B cell (primary cell): ENCODE measurements at regions of chrX and their contacts with region 1.

Region 1: GRCh38 chrX:30570505-30570904 is 7.1 kb downstream of the TASL start:
- DNase-seq: peak; percentile 50
- ATAC-seq: peak; percentile 43
- H3K4me3 ChIP-seq: no peak overlapping the region
- H3K4me3 Mint-ChIP-seq: no peak overlapping the region
- H3K27ac ChIP-seq: no peak overlapping the region
- H3K27ac Mint-ChIP-seq: no peak overlapping the region
- H3K4me1 ChIP-seq: peaks cover 31 to 37% of the 10 kb centered on the region in 2 donors
- H3K4me1 Mint-ChIP-seq: peaks cover 43% of the 10 kb centered on the region
- H3K27me3 ChIP-seq: no peaks in the 10 kb centered on the region
- H3K27me3 Mint-ChIP-seq: no peaks in the 10 kb centered on the region
- CTCF ChIP-seq: peak; percentile 66

Region 2: DNA sequence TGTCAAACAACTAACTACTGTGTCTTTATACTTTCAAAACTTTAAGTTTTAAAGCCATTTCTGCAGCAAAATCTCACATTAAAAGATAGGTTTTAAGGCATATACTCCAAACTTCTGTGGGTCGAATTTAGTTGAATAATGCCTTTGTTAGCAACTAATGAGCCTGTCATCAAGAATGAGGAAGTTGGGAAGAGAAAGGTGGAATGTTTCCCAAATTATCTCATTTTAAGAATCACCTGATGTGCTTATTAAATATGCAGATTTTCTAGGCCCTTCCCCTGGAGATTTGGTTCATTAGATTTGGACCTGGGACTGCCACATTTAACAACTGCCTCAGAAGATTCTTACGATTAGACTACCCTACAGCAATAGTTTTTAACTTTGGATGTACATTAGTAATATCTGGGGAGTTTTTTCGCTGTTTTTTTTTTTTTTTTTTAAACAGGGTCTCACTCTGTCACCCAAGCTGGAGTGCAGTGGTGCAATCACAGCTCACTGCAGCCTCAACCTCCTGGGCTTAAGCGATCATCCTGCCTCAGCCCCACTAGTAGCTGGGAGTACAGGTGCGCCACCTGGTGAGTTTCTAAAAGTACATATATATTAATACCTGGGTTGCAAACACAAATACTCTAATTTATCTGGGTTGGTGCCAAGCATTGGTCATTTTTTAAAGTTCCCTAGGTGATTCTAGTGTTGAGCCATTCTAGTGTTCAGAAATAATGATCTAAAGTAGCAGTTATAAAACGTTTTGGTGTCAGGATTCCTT is 23.1 kb after region 1 on chrX:
- CTCF ChIA-PET with region 1: interaction called, 65 read pairs
- POLR2A ChIA-PET with region 1: interaction called, 5 read pairs
- intact Hi-C with region 1: loop called (anchors 1 kb)
- DNase-seq: peak; percentile 62
- ATAC-seq: peak; percentile 46
- H3K4me3 ChIP-seq: peak overlapping the region in 1 of 5 experiments; percentile 6
- H3K4me3 Mint-ChIP-seq: peak overlapping the region; percentile 70
- H3K27ac ChIP-seq: peak overlapping the region; percentile 65 to 73
- H3K27ac Mint-ChIP-seq: peak overlapping the region; percentile 87
- H3K4me1 ChIP-seq: peaks cover 60 to 61% of the 10 kb centered on the region in 2 donors
- H3K4me1 Mint-ChIP-seq: peaks cover 68% of the 10 kb centered on the region
- H3K27me3 ChIP-seq: no peaks in the 10 kb centered on the region
- H3K27me3 Mint-ChIP-seq: no peaks in the 10 kb centered on the region
- CTCF ChIP-seq: peak; percentile 36

Region 3: DNA sequence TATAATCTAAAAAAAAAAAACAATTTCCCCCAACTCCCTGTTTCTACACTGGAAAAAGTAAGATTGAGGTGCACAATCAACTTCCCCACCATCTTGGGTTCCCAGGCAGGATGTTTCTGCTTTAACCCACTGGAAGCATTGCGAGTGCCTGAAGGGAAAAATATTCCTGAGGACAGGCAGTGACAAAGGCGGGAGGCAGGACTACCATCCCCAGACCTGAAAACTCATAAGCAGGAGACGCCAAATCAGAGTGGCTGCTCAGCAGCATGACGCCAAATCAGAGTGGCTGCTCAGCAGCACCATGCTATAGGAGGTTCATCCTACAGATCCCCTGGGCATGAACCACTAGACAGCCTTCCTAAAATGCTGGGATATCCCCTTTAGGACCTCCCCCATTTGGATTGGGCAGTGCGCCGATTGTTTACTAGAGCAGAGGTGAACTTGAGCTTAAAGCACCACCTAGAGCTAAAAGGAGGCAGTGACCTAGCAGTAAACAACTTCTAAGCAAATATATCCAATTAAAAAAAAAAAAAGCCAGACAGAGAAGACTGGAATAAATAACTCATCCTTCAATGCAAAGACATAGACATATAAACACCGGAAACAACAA is 47.8 kb after region 1 on chrX:
- CTCF ChIA-PET with region 1: interaction called, 24 read pairs
- POLR2A ChIA-PET with region 1: no interaction called
- intact Hi-C with region 1: no loop called
- DNase-seq: no peak
- ATAC-seq: no peak
- H3K4me3 ChIP-seq: no peak overlapping the region
- H3K4me3 Mint-ChIP-seq: no peak overlapping the region
- H3K27ac ChIP-seq: no peak overlapping the region
- H3K27ac Mint-ChIP-seq: no peak overlapping the region
- H3K4me1 ChIP-seq: no peaks in the 10 kb centered on the region
- H3K4me1 Mint-ChIP-seq: peaks cover 2% of the 10 kb centered on the region
- H3K27me3 ChIP-seq: no peaks in the 10 kb centered on the region
- H3K27me3 Mint-ChIP-seq: no peaks in the 10 kb centered on the region
- CTCF ChIP-seq: no peak

Region 4: DNA sequence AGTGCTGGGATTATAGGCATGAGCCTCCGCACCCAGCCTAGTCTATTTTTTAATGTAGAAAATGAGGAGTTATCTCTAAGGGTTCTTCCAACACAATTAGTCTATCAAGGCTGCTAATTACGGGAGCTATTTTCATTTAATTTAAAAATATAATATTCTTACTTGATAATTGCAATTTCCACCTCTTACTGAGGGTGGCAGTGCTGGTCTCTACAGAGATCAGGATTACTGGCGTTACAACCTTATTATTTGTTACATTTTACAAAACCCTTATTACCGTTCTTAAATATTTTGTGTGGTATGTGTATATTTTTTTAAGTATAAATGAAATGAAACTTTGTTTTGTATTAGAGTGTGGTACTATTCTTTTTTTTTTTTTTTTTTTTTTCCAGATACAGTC is 65.1 kb after region 1 on chrX:
- CTCF ChIA-PET with region 1: no interaction called
- POLR2A ChIA-PET with region 1: no interaction called
- intact Hi-C with region 1: no loop called
- DNase-seq: no peak
- ATAC-seq: no peak
- H3K4me3 ChIP-seq: no peak overlapping the region
- H3K4me3 Mint-ChIP-seq: no peak overlapping the region
- H3K27ac ChIP-seq: no peak overlapping the region
- H3K27ac Mint-ChIP-seq: no peak overlapping the region
- H3K4me1 ChIP-seq: peaks cover 4 to 6% of the 10 kb centered on the region in 2 donors
- H3K4me1 Mint-ChIP-seq: peaks cover 5% of the 10 kb centered on the region
- H3K27me3 ChIP-seq: no peaks in the 10 kb centered on the region
- H3K27me3 Mint-ChIP-seq: no peaks in the 10 kb centered on the region
- CTCF ChIP-seq: peak; percentile 27

Region 5: GRCh38 chrX:30713061-30713525 is 142.6 kb after region 1 on chrX:
- CTCF ChIA-PET with region 1: no interaction called
- POLR2A ChIA-PET with region 1: no interaction called
- intact Hi-C with region 1: loop called (anchors 2 kb)
- DNase-seq: peak; percentile 18
- ATAC-seq: no peak
- H3K4me3 ChIP-seq: no peak overlapping the region
- H3K4me3 Mint-ChIP-seq: peak overlapping the region; percentile 49
- H3K27ac ChIP-seq: no peak overlapping the region
- H3K27ac Mint-ChIP-seq: peak overlapping the region; percentile 65
- H3K4me1 ChIP-seq: peaks cover 7% of the 10 kb centered on the region in 2 donors
- H3K4me1 Mint-ChIP-seq: peaks cover 8% of the 10 kb centered on the region
- H3K27me3 ChIP-seq: no peaks in the 10 kb centered on the region
- H3K27me3 Mint-ChIP-seq: no peaks in the 10 kb centered on the region
- CTCF ChIP-seq: peak; percentile 12